Endothelial cell of umbilical vein (primary cell): ENCODE measurements at regions of chr15 and their contacts with region 1.

Region 1: DNA sequence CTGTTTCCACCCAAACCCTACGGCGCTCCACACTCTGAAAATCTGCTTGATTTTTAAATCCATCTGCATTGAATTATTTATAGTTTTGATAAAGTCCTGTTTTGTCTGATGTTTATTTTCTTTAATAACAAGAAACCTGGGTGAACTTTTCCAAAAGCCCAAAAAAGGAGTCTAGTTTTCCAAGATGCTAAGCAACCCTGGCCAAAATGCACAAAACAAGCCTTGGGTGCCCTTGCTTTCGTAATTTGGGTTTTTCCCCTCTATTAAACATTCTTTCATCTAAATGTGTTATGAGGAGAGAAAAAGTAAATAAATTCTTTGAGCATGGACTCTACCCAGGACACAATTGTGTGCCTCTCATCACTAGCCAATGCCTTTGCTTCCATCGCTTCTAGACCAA is 468.9 kb downstream of the MCTP2 start:
- DNase-seq: no peak
- H3K4me3 ChIP-seq: no peak overlapping the region
- H3K27ac ChIP-seq: no peak overlapping the region
- H3K4me1 ChIP-seq: peaks cover 44% of the 10 kb centered on the region
- H3K27me3 ChIP-seq: no peaks in the 10 kb centered on the region
- CTCF ChIP-seq: no peak
- POLR2A ChIP-seq: no peak

Region 2: GRCh38 chr15:94607176-94607654 is 93.0 kb before region 1 on chr15:
- CTCF ChIA-PET with region 1: interaction called, 3 read pairs
- POLR2A ChIA-PET with region 1: no interaction called
- dilution Hi-C with region 1: no loop called
- intact Hi-C with region 1: loop called (anchors 1 kb)
- DNase-seq: peak; percentile 96
- H3K4me3 ChIP-seq: no peak overlapping the region
- H3K27ac ChIP-seq: peak overlapping the region; percentile 97
- H3K4me1 ChIP-seq: peaks cover 40% of the 10 kb centered on the region
- H3K27me3 ChIP-seq: no peaks in the 10 kb centered on the region
- CTCF ChIP-seq: no peak
- POLR2A ChIP-seq: peak; percentile 75

Region 3: DNA sequence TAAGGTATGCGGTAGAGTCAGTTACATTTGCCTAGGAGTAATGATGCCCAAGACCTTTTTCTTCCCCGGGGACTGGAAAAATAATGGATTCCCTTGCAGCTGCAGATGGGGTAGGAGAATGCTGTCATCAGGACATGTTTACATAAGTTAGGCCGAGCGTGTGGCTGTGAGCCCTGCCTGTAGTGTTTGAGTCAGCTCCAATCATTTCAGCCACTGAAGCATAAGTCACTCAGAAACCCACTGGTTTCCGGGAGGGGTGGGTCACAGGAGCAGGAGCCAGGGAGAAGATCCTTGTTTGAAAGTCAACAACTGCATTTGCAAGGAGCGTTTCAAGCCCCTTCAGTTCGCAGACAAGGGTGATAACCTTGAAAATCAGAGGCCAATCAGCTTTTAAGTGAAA is 93.4 kb after region 1 on chr15:
- CTCF ChIA-PET with region 1: no interaction called
- POLR2A ChIA-PET with region 1: no interaction called
- dilution Hi-C with region 1: no loop called
- intact Hi-C with region 1: loop called (anchors 1 kb)
- DNase-seq: no peak
- H3K4me3 ChIP-seq: no peak overlapping the region
- H3K27ac ChIP-seq: no peak overlapping the region
- H3K4me1 ChIP-seq: peaks cover 12% of the 10 kb centered on the region
- H3K27me3 ChIP-seq: no peaks in the 10 kb centered on the region
- CTCF ChIP-seq: no peak
- POLR2A ChIP-seq: no peak

Region 4: GRCh38 chr15:95169541-95170459 is 469.6 kb after region 1 on chr15:
- CTCF ChIA-PET with region 1: no interaction called
- POLR2A ChIA-PET with region 1: no interaction called
- dilution Hi-C with region 1: no loop called
- intact Hi-C with region 1: loop called (anchors 10 kb)
- DNase-seq: no peak
- H3K4me3 ChIP-seq: no peak overlapping the region
- H3K27ac ChIP-seq: no peak overlapping the region
- H3K4me1 ChIP-seq: peaks cover 7% of the 10 kb centered on the region
- H3K27me3 ChIP-seq: no peaks in the 10 kb centered on the region
- CTCF ChIP-seq: no peak
- POLR2A ChIP-seq: no peak